Caco-2 (cell line): ENCODE measurements at regions of chr2 and their contacts with region 1.

Region 1: GRCh38 chr2:164792316-164793178 is 49.1 kb downstream of the COBLL1 start:
- DNase-seq: peak; percentile 38 to 40
- H3K4me3 ChIP-seq: no peak overlapping the region
- H3K4me3 Mint-ChIP-seq: peak overlapping the region; percentile 43
- H3K27ac Mint-ChIP-seq: peak overlapping the region; percentile 91
- H3K4me1 ChIP-seq: peaks cover 27% of the 10 kb centered on the region
- H3K4me1 Mint-ChIP-seq: peaks cover 31% of the 10 kb centered on the region
- H3K27me3 ChIP-seq: no peaks in the 10 kb centered on the region
- H3K27me3 Mint-ChIP-seq: no peaks in the 10 kb centered on the region
- CTCF ChIP-seq: no peak

Region 2: DNA sequence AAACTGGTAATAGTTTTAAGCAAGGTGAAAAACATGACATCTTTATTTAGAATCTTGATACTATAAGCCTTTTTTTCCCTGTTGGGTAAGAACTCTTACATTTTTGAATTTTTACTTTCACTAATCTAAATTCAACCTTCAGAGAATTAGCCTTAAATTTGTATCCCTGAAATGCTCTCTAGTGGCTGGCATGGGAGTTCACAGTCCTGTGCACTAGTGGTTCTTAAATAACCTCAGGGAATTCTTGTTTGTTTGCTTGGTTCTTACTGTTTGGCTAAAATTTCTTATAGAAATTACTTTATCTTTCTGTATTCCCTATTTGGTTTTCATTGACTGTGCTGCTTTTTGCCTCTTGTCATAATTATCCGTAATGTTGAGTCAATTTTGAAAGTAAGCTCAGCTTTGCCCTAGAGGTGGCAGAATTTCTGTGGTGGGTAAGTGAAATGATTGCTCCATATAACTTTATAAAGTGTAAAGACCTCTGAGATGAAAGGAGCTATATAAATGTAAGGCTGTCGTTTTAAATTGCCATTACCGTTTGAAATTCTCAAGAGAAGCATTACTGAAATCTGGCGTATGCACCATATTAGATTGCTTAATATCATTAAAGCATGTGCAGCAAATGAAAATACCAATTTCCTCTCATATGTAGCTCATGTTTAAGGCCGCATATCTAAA is 665.4 kb before region 1 on chr2:
- CTCF ChIA-PET with region 1: no interaction called
- POLR2A ChIA-PET with region 1: no interaction called
- intact Hi-C with region 1: no loop called
- DNase-seq: no peak
- H3K4me3 ChIP-seq: no peak overlapping the region
- H3K4me3 Mint-ChIP-seq: no peak overlapping the region
- H3K27ac Mint-ChIP-seq: no peak overlapping the region
- H3K4me1 ChIP-seq: no peaks in the 10 kb centered on the region
- H3K4me1 Mint-ChIP-seq: no peaks in the 10 kb centered on the region
- H3K27me3 ChIP-seq: no peaks in the 10 kb centered on the region
- H3K27me3 Mint-ChIP-seq: no peaks in the 10 kb centered on the region
- CTCF ChIP-seq: no peak

Region 3: GRCh38 chr2:164757924-164758695 is 34.4 kb before region 1 on chr2:
- CTCF ChIA-PET with region 1: interaction called, 3 read pairs
- POLR2A ChIA-PET with region 1: no interaction called
- intact Hi-C with region 1: loop called (anchors 5 kb)
- DNase-seq: no peak
- H3K4me3 ChIP-seq: no peak overlapping the region
- H3K4me3 Mint-ChIP-seq: no peak overlapping the region
- H3K27ac Mint-ChIP-seq: no peak overlapping the region
- H3K4me1 ChIP-seq: peaks cover 11% of the 10 kb centered on the region; the same call in 1 of the 2 replicates
- H3K4me1 Mint-ChIP-seq: peaks cover 19% of the 10 kb centered on the region
- H3K27me3 ChIP-seq: no peaks in the 10 kb centered on the region
- H3K27me3 Mint-ChIP-seq: no peaks in the 10 kb centered on the region
- CTCF ChIP-seq: no peak